HCT116 (cell line): ENCODE measurements at regions of chr9 and their contacts with region 1.

Region 1: DNA sequence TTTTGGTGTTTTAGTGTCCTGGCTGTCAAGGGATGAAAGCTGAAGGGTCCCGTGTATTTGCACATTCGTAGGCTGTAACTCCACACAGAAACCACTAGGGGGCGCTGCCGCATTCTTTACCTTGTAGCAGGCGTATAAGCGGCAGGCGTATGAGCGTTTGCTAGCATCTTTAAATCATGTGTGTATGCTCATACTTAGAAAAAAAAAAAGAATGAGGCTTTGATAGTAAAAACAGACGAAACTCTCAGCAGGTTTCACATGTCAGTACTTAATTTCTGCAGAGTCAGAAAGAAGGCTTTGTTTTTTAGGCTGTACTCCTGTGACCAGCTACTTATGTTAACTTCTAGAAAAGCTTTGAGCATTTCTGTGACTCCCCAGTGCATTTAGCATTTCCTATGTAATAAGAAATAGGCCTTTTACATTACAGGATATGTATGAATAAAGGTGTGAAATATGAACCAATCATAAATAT is 218.8 kb upstream of the ADAMTSL1 start:
- DNase-seq: peak; percentile 48
- ATAC-seq: peak; percentile 83
- H3K4me3 ChIP-seq: no peak overlapping the region
- H3K27ac ChIP-seq: no peak overlapping the region
- H3K4me1 ChIP-seq: no peaks in the 10 kb centered on the region
- H3K27me3 ChIP-seq: no peaks in the 10 kb centered on the region
- CTCF ChIP-seq: peak; percentile 53 to 89 (median 82); a peak in 5 of 6 replicates
- POLR2A ChIP-seq: no peak
- RAD21 ChIP-seq: peak; percentile 68

Region 2: GRCh38 chr9:18268381-18268780 is 13.2 kb after region 1 on chr9:
- CTCF ChIA-PET with region 1: no interaction called
- POLR2A ChIA-PET with region 1: no interaction called
- RAD21 ChIA-PET with region 1: no interaction called
- intact Hi-C with region 1: no loop called
- DNase-seq: peak; percentile 18
- ATAC-seq: peak; percentile 75
- H3K4me3 ChIP-seq: no peak overlapping the region
- H3K27ac ChIP-seq: no peak overlapping the region
- H3K4me1 ChIP-seq: no peaks in the 10 kb centered on the region
- H3K27me3 ChIP-seq: no peaks in the 10 kb centered on the region
- CTCF ChIP-seq: no peak
- POLR2A ChIP-seq: no peak
- RAD21 ChIP-seq: no peak

Region 3: DNA sequence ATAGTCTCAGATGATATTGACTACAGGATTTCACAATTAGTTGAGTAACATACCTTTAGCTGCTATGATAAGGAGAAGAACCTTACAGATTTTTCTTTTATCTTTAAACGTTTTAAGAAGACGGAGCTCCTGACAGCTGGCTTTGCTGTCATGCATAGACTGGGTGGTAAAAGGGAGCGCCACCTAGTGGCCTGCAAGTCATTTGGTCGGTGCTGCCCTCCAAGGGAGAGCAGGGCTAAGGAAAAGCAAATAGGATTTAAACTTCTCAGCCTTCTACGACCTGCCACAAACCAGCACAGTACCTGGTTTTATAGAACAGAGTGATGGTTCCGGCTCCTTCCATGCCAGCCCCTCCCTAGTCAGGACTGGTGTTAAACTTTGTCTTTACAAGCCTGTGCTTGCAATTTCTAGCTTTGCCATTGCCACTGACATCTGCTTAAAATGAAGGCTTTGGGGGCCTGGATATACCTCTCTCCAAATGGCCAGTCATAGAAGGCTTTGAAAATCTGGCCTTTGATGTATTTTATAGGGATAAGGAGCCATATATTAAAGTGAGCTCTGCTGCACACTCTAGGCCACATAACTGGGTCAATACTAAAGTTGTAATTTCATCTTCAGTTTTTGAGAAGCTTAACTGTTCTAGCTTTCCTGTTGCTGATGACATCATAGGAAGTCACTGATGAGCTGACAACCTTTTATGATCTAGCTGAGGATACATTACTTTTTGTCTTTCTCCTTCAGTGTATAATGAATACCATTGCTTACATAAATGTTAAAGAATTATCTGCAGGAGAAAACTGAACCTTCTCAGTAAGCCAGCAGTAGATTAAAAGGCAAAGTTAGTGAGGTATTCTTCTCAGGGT is 187.7 kb after region 1 on chr9:
- CTCF ChIA-PET with region 1: interaction called, 9 read pairs
- POLR2A ChIA-PET with region 1: no interaction called
- RAD21 ChIA-PET with region 1: interaction called, 3 read pairs
- intact Hi-C with region 1: loop called (anchors 1 kb)
- DNase-seq: peak; percentile 43
- ATAC-seq: peak; percentile 97
- H3K4me3 ChIP-seq: no peak overlapping the region
- H3K27ac ChIP-seq: no peak overlapping the region
- H3K4me1 ChIP-seq: no peaks in the 10 kb centered on the region
- H3K27me3 ChIP-seq: no peaks in the 10 kb centered on the region
- CTCF ChIP-seq: peak; percentile 60 to 87 (median 82)
- POLR2A ChIP-seq: no peak
- RAD21 ChIP-seq: peak; percentile 47

Region 4: DNA sequence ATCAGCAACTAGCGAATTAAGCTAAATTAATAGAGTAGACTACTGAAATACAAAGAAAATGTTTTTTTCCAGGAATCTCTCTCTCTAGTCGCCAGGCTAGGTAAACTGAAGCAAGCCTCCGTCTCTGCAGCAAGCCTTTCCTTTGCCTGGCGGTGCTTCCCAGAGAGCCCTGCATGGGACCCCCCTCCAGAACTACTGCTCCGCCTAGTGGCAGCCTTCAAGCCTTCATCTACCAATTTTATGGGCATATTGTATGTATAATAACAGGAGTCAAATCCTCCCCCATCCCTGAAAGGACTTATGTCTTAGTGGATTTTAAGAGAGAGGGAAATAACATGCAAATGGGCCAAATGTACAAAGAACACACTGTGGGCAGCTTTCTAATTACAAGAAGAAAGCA is 535.9 kb after region 1 on chr9:
- CTCF ChIA-PET with region 1: no interaction called
- POLR2A ChIA-PET with region 1: no interaction called
- RAD21 ChIA-PET with region 1: no interaction called
- intact Hi-C with region 1: loop called (anchors 2 kb)
- DNase-seq: peak; percentile 24
- ATAC-seq: peak; percentile 94
- H3K4me3 ChIP-seq: no peak overlapping the region
- H3K27ac ChIP-seq: no peak overlapping the region
- H3K4me1 ChIP-seq: no peaks in the 10 kb centered on the region
- H3K27me3 ChIP-seq: peaks cover 32% of the 10 kb centered on the region
- CTCF ChIP-seq: peak; percentile 29 to 70 (median 68); a peak in 5 of 6 replicates
- POLR2A ChIP-seq: no peak
- RAD21 ChIP-seq: peak; percentile 49

Region 5: GRCh38 chr9:19018201-19018600 is 763.0 kb after region 1 on chr9:
- CTCF ChIA-PET with region 1: no interaction called
- POLR2A ChIA-PET with region 1: no interaction called
- RAD21 ChIA-PET with region 1: no interaction called
- intact Hi-C with region 1: loop called (anchors 5 kb)
- DNase-seq: no peak
- ATAC-seq: no peak
- H3K4me3 ChIP-seq: no peak overlapping the region
- H3K27ac ChIP-seq: no peak overlapping the region
- H3K4me1 ChIP-seq: no peaks in the 10 kb centered on the region
- H3K27me3 ChIP-seq: no peaks in the 10 kb centered on the region; the same call in 1 of the 2 replicates
- CTCF ChIP-seq: no peak
- POLR2A ChIP-seq: no peak
- RAD21 ChIP-seq: no peak

Region 6: DNA sequence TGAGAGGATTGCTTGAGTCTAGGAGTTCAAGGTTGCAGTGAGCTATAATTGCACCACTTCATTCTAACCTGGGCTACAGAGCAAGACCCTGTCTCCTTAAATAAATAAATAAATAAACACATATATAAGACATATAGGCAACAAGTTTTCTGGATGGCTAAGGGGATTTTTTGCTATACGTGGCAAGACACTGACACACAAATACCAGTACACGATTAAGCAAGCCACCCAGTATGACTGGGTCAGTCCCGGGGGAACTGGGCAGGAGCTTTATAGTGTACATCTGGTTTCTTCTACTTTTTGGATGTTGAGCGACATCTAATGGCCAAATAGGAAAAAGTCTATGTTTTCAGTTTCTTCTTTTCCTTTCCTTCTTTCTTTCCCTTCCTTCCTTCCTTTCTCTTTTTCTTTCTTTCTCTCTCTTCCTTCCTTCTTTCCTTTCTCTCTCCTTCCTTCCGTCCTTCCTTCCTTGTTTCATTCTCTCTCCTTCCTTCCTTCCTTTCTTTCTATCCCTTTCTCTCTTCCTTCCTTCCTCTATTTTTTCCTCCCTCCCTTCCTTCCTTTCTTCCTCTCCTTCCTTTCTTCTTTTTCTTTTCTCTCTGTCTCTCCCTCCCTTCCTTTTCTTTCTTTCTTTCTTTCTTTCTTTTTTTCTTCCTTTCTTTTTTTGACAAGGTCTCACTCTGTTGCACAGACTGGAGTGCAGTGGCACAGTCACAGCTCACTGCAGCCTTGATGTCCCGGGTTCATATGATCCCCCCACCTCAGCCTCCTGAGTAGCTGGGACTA is 919.1 kb after region 1 on chr9:
- CTCF ChIA-PET with region 1: interaction called, 3 read pairs
- POLR2A ChIA-PET with region 1: no interaction called
- RAD21 ChIA-PET with region 1: no interaction called
- intact Hi-C with region 1: loop called (anchors 5 kb)
- DNase-seq: peak; percentile 34
- ATAC-seq: peak; percentile 91
- H3K4me3 ChIP-seq: no peak overlapping the region
- H3K27ac ChIP-seq: no peak overlapping the region
- H3K4me1 ChIP-seq: no peaks in the 10 kb centered on the region
- H3K27me3 ChIP-seq: no peaks in the 10 kb centered on the region
- CTCF ChIP-seq: peak; percentile 37 to 62 (median 61); a peak in 5 of 6 replicates
- POLR2A ChIP-seq: no peak
- RAD21 ChIP-seq: peak; percentile 81